MCF 10A (cell line): ENCODE measurements at regions of chr1 and their contacts with region 1.

Region 1: DNA sequence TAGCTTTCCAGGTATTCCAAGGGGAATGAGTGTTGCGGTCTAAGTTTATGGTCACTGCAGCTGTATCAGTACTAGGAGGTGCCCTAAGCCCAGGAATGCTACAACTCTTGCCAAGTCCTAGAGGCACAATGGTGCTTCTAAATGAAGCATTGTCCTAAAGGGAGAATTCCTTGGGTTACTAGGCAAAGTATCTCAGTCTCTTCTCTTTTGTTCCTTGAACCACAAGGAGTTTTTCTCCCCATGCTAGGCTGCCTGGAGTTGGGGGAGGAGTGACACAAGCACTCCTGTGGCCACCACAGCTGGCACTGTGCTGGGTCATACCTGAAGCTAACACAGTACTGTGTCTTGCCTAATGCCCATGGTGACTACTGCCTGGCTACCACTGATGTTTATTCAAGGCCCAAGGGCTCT is 50.7 kb downstream of the KMO start:
- DNase-seq: peak; percentile 75
- H3K4me3 Mint-ChIP-seq: no peak overlapping the region
- H3K27ac Mint-ChIP-seq: peak overlapping the region; percentile 73
- H3K4me1 Mint-ChIP-seq: peaks cover 8% of the 10 kb centered on the region
- H3K27me3 Mint-ChIP-seq: no peaks in the 10 kb centered on the region
- CTCF ChIP-seq: no peak

Region 2: GRCh38 chr1:241440904-241441303 is 142.0 kb before region 1 on chr1:
- CTCF ChIA-PET with region 1: no interaction called
- POLR2A ChIA-PET with region 1: no interaction called
- intact Hi-C with region 1: no loop called
- DNase-seq: no peak
- H3K4me3 Mint-ChIP-seq: no peak overlapping the region
- H3K27ac Mint-ChIP-seq: no peak overlapping the region
- H3K4me1 Mint-ChIP-seq: no peaks in the 10 kb centered on the region
- H3K27me3 Mint-ChIP-seq: no peaks in the 10 kb centered on the region
- CTCF ChIP-seq: no peak

Region 3: DNA sequence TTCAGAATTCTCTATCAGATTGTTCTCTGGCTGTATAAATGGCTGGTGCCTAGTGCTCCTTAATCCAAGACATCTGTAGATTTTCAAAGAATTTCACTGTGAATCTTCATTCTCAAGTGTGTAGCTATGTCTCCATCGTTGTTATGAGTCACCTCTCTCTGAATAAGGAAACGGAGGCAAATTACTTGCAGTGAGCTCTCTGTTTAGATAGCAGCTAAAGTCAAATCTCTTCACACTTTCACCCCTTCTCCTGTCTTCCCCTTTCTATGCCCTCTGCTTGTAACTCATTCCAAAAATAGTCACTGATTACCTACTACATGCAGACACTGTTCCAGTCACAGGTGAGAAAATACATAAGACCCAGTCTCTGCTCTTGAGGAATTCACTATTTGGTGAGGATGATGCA is 17.6 kb after region 1 on chr1:
- CTCF ChIA-PET with region 1: interaction called, 3 read pairs
- POLR2A ChIA-PET with region 1: interaction called, 22 read pairs
- intact Hi-C with region 1: no loop called
- DNase-seq: peak; percentile 58
- H3K4me3 Mint-ChIP-seq: no peak overlapping the region
- H3K27ac Mint-ChIP-seq: peak overlapping the region; percentile 77
- H3K4me1 Mint-ChIP-seq: peaks cover 52% of the 10 kb centered on the region
- H3K27me3 Mint-ChIP-seq: no peaks in the 10 kb centered on the region
- CTCF ChIP-seq: no peak

Region 4: GRCh38 chr1:242017584-242018233 is 434.8 kb after region 1 on chr1:
- CTCF ChIA-PET with region 1: no interaction called
- POLR2A ChIA-PET with region 1: no interaction called
- intact Hi-C with region 1: no loop called
- DNase-seq: peak; percentile 86
- H3K4me3 Mint-ChIP-seq: no peak overlapping the region
- H3K27ac Mint-ChIP-seq: no peak overlapping the region
- H3K4me1 Mint-ChIP-seq: peaks cover 7% of the 10 kb centered on the region
- H3K27me3 Mint-ChIP-seq: no peaks in the 10 kb centered on the region
- CTCF ChIP-seq: peak; percentile 88